PC-9 (cell line): ENCODE measurements at regions of chr3 and their contacts with region 1.

Region 1: GRCh38 chr3:105518806-105519418 is 152.2 kb downstream of the ALCAM start:
- DNase-seq: peak; percentile 22 to 57
- H3K4me3 ChIP-seq: no peak overlapping the region
- H3K27ac ChIP-seq: no peak overlapping the region
- H3K4me1 ChIP-seq: peaks cover 8% of the 10 kb centered on the region
- H3K27me3 ChIP-seq: no peaks in the 10 kb centered on the region
- CTCF ChIP-seq: peak; percentile 95

Region 2: GRCh38 chr3:104273046-104273649 is 1245.8 kb before region 1 on chr3:
- CTCF ChIA-PET with region 1: no interaction called
- POLR2A ChIA-PET with region 1: no interaction called
- intact Hi-C with region 1: loop called (anchors 2 kb)
- DNase-seq: no peak
- H3K4me3 ChIP-seq: no peak overlapping the region
- H3K27ac ChIP-seq: no peak overlapping the region
- H3K4me1 ChIP-seq: no peaks in the 10 kb centered on the region
- H3K27me3 ChIP-seq: no peaks in the 10 kb centered on the region
- CTCF ChIP-seq: peak; percentile 95

Region 3: GRCh38 chr3:104596551-104596950 is 922.4 kb before region 1 on chr3:
- CTCF ChIA-PET with region 1: no interaction called
- POLR2A ChIA-PET with region 1: no interaction called
- intact Hi-C with region 1: loop called (anchors 1 kb)
- DNase-seq: peak in 1 of 2 experiments; percentile 20
- H3K4me3 ChIP-seq: no peak overlapping the region
- H3K27ac ChIP-seq: no peak overlapping the region
- H3K4me1 ChIP-seq: no peaks in the 10 kb centered on the region; the same call in 1 of the 2 replicates
- H3K27me3 ChIP-seq: no peaks in the 10 kb centered on the region
- CTCF ChIP-seq: peak; percentile 86

Region 4: DNA sequence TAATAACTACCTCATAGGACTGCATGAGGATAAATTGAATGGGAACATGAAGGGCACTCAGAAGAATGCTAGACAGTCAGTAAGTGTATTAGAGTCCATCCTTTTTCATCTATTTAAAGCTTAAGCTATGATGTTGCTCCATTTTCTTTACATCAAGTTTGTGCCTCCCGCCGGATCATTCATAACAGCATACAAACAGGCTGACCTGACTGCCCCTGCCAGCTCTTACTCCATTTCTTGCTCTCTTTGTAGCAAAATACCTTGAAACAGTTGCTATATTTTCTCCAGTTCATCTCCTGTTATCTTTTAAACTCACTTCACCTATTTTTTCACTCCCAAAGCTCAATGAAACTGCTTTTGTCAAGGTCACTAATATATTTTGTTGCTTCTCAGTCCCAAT is 467.8 kb before region 1 on chr3:
- CTCF ChIA-PET with region 1: no interaction called
- POLR2A ChIA-PET with region 1: no interaction called
- intact Hi-C with region 1: loop called (anchors 10 kb)
- DNase-seq: no peak
- H3K4me3 ChIP-seq: no peak overlapping the region
- H3K27ac ChIP-seq: no peak overlapping the region
- H3K4me1 ChIP-seq: no peaks in the 10 kb centered on the region
- H3K27me3 ChIP-seq: no peaks in the 10 kb centered on the region
- CTCF ChIP-seq: no peak

Region 5: DNA sequence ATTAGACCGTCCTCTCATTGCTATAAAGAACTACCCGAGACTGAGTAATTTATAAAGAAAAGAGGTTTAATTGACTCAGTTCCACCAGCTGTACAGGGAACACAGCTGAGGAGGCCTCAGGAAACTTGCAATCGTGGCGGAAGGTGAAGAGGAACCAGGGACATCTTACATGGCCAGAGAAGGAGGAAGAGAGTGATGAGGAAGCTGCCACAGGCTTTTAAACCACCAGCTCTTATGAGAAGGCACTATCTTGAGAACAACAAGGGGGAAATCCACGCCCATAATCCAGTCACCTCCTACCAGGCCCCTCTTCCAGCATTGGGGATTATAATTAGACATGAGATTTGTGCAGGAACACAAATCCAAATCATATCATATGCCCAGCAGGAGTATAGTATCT is 13.7 kb before region 1 on chr3:
- CTCF ChIA-PET with region 1: no interaction called
- POLR2A ChIA-PET with region 1: no interaction called
- intact Hi-C with region 1: no loop called
- DNase-seq: no peak
- H3K4me3 ChIP-seq: no peak overlapping the region
- H3K27ac ChIP-seq: no peak overlapping the region
- H3K4me1 ChIP-seq: no peaks in the 10 kb centered on the region
- H3K27me3 ChIP-seq: no peaks in the 10 kb centered on the region
- CTCF ChIP-seq: no peak

Region 6: DNA sequence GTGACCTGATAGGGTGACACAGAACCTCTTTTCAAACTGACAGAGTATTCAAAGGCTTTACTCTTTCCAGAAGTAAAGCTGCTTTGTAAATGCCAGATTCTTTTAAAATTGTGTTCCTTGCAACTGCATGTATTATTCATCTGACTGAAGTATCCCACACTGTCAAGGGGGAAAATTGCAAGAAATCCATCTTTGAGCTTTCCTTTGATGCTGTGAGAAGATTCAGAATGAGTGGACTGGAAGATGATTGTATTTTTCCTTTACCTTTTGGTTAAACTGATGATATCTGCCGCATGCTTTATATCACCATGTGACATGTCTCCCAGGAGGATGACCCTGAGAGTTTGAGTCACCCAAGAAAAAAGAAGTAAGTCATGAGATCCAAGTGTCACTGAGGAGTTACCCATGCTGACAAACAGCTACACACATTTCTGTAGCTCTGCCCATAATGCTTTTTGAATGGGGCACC is 600.7 kb after region 1 on chr3:
- CTCF ChIA-PET with region 1: no interaction called
- POLR2A ChIA-PET with region 1: no interaction called
- intact Hi-C with region 1: no loop called
- DNase-seq: no peak
- H3K4me3 ChIP-seq: no peak overlapping the region
- H3K27ac ChIP-seq: no peak overlapping the region
- H3K4me1 ChIP-seq: peaks cover 65% of the 10 kb centered on the region
- H3K27me3 ChIP-seq: no peaks in the 10 kb centered on the region
- CTCF ChIP-seq: no peak

Region 7: DNA sequence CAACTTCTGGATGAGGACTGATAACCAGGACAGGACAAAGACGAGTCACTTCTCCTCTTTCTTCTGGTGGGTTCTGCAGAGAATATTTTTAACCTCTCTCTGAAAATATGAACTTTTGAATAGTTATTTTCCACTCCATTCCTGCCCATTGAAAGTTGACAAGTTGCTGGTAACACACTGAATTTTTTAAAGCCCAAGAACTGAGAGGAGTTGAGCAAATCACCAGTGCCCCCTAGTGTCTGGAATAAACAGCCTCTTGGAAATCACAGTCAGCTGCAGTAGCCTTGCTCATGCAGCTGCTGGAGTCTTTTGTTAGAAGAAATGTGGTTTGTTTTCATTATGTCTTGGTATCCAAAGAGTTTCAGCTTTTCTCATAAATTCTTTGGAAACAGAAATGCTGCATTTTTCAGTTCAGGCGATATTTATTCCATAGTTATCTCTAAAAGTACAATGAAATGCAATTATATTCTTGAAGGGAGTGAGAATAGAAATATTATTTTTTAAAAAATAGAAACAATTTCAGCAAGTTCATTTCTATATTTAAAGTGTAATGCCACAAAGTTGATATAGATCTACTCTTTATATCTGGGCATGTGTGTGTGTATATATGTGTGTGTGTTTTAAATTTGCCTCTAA is 1090.9 kb after region 1 on chr3:
- CTCF ChIA-PET with region 1: interaction called, 3 read pairs
- POLR2A ChIA-PET with region 1: no interaction called
- intact Hi-C with region 1: loop called (anchors 5 kb)
- DNase-seq: peak; percentile 64 to 73
- H3K4me3 ChIP-seq: no peak overlapping the region
- H3K27ac ChIP-seq: no peak overlapping the region
- H3K4me1 ChIP-seq: peaks cover 11% of the 10 kb centered on the region
- H3K27me3 ChIP-seq: no peaks in the 10 kb centered on the region
- CTCF ChIP-seq: peak; percentile 98